Naive thymus-derived CD8-positive, alpha-beta T cell (primary cell): ENCODE measurements at regions of chr11 and their contacts with region 1.

Region 1: DNA sequence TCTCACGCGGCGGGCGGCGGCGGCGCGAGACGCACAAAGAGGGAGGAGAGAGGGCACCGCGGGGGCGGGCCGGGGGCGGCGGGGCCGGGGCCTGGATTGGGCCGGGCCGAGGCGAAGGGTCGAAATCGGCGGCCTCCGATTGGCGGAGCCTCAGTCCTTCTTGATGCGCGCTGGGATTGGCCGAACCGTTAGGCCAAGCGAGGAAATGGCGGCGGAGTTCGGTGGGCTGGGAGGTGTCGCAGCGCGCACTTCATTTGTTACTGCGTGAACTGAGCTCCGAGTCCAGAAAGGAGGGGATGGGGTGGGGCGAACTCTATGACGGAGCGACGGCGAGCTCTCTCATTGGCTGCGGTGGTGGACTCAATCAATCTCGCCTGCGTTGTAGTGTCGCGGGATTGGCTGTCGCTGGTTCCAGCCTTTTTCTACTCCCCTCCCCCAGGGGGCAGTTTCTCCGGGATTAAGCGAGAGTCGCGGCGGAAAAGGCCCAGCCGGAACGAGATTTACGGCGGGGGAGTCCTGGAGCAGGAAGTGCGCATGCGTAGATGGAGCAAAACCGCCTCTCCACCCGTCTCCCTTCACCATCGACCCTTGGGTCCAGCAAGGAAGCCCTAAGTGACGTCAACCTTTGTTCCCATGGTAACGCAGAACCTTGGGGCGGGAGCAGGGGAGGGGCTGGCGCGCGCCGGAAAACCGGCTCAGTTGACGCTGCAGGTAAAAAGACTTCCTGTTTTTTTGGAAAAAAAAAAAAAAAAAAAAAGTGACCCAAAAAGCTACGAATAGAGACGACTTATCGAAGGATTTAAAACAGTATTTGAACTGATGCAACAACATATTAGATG is at the start of gene SF1:
- DNase-seq: peak; percentile 94 to 100 (median 100)
- ATAC-seq: peak; percentile 79 to 84
- H3K4me3 Mint-ChIP-seq: peak within 1 kb of the TSS; percentile 90 to 97 (median 94)
- H3K27ac Mint-ChIP-seq: peak within 1 kb of the TSS; percentile 98 to 100 (median 100)
- H3K4me1 Mint-ChIP-seq: peaks cover 20 to 68% (median 60%) of the 10 kb centered on the region in 4 donors
- H3K27me3 Mint-ChIP-seq: peaks cover 0 to 5% (median 0%) of the 10 kb centered on the region in 5 donors
- polyA plus RNA-seq, gene SF1: 87.0 to 138 (median 96.6) TPM

Region 2: DNA sequence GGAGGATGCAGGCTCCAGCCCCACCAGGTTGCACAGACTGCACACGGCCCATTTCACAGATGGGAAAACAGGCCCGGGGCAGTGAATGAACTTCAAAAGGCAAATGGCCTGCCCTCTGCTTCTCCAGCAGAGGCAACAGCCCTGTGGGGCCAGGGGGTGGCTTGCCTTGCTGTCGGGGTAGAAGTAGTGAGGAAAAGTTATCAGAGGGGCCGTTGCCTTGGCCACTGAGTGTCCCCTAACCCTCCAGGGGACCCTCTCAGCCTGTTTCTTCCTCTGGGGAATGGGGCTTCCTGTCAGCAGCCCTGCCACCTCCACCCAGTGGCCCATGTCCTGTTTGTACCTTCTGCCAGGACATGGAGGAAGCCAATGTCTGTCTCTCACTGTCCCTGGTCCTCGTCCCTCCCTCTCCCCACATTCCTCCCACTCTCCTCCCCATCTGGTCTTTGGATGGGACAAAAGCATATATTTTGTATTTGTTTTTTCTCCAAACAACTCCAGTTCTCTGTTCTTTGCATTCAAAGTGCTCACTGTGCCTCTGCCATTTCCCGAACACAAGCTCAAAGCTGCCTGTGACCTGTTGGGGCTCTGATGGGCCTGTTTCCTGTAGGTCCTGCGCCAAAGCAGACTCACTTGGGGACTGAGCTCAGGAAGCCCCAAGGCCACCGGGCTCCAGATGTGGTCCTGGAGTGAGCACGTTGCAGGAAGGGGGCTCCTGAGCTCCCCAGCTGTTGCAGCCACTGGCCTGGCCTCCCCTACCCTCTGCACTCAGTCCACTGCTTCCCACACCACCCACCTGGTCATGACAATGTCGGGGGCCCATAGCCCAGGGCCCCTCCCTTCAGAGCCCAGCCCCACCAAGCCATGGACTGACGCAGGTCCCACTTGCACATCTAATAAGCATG is 14.8 kb after region 1 on chr11:
- POLR2A ChIA-PET with region 1: interaction called, 25 read pairs
- DNase-seq: peak in 1 of 10 donors; percentile 42
- ATAC-seq: peak; percentile 68 to 76
- H3K4me3 Mint-ChIP-seq: peak overlapping the region in 8 of 10 donors; percentile 11 to 73 (median 38)
- H3K27ac Mint-ChIP-seq: peak overlapping the region; percentile 71 to 96 (median 90)
- H3K4me1 Mint-ChIP-seq: peaks cover 17 to 41% (median 29%) of the 10 kb centered on the region in 4 donors
- H3K27me3 Mint-ChIP-seq: no peaks in the 10 kb centered on the region

Region 3: GRCh38 chr11:64810271-64810890 is 31.7 kb after region 1 on chr11 and contains the start of gene MEN1:
- POLR2A ChIA-PET with region 1: interaction called, 54 read pairs
- DNase-seq: peak; percentile 59 to 88 (median 76)
- ATAC-seq: peak; percentile 90 to 92
- H3K4me3 Mint-ChIP-seq: peak within 1 kb of the TSS; percentile 91 to 99 (median 94)
- H3K27ac Mint-ChIP-seq: peak within 1 kb of the TSS; percentile 90 to 98 (median 96)
- H3K4me1 Mint-ChIP-seq: peaks cover 22 to 35% (median 29%) of the 10 kb centered on the region in 4 donors
- H3K27me3 Mint-ChIP-seq: no peaks in the 10 kb centered on the region
- polyA plus RNA-seq, gene MEN1: 22.1 to 57.4 (median 36.1) TPM

Region 4: GRCh38 chr11:64864473-64865285 is 86.0 kb after region 1 on chr11:
- POLR2A ChIA-PET with region 1: interaction called, 65 read pairs
- DNase-seq: peak in 1 of 10 donors; percentile 58
- ATAC-seq: peak in 1 of 2 donors; percentile 2
- H3K4me3 Mint-ChIP-seq: peak overlapping the region; percentile 66 to 85 (median 81)
- H3K27ac Mint-ChIP-seq: peak overlapping the region; percentile 72 to 99 (median 95)
- H3K4me1 Mint-ChIP-seq: peaks cover 42 to 97% (median 91%) of the 10 kb centered on the region in 4 donors
- H3K27me3 Mint-ChIP-seq: no peaks in the 10 kb centered on the region

Region 5: GRCh38 chr11:65117216-65118096 is 338.7 kb after region 1 on chr11 and contains the start of gene ZNHIT2:
- POLR2A ChIA-PET with region 1: interaction called, 16 read pairs
- DNase-seq: peak; percentile 96 to 100 (median 100)
- ATAC-seq: peak; percentile 60 to 66
- H3K4me3 Mint-ChIP-seq: peak within 1 kb of the TSS; percentile 87 to 94 (median 90)
- H3K27ac Mint-ChIP-seq: peak within 1 kb of the TSS; percentile 82 to 99 (median 97)
- H3K4me1 Mint-ChIP-seq: peaks cover 24 to 71% (median 51%) of the 10 kb centered on the region in 4 donors
- H3K27me3 Mint-ChIP-seq: no peaks in the 10 kb centered on the region
- polyA plus RNA-seq, gene ZNHIT2: 24.3 to 33.1 (median 29.8) TPM